Naive thymus-derived CD8-positive, alpha-beta T cell (primary cell): ENCODE measurements at regions of chr14 and their contacts with region 1.

Region 1: GRCh38 chr14:61512026-61512834 is 183.1 kb upstream of the HIF1A start:
- DNase-seq: no peak
- ATAC-seq: peak; percentile 28 to 35
- H3K4me3 Mint-ChIP-seq: peak overlapping the region in 6 of 10 donors; percentile 22 to 50 (median 45)
- H3K27ac Mint-ChIP-seq: peak overlapping the region in 9 of 10 donors; percentile 83 to 97 (median 92)
- H3K4me1 Mint-ChIP-seq: peaks cover 50 to 93% (median 86%) of the 10 kb centered on the region in 4 donors
- H3K27me3 Mint-ChIP-seq: no peaks in the 10 kb centered on the region

Region 2: DNA sequence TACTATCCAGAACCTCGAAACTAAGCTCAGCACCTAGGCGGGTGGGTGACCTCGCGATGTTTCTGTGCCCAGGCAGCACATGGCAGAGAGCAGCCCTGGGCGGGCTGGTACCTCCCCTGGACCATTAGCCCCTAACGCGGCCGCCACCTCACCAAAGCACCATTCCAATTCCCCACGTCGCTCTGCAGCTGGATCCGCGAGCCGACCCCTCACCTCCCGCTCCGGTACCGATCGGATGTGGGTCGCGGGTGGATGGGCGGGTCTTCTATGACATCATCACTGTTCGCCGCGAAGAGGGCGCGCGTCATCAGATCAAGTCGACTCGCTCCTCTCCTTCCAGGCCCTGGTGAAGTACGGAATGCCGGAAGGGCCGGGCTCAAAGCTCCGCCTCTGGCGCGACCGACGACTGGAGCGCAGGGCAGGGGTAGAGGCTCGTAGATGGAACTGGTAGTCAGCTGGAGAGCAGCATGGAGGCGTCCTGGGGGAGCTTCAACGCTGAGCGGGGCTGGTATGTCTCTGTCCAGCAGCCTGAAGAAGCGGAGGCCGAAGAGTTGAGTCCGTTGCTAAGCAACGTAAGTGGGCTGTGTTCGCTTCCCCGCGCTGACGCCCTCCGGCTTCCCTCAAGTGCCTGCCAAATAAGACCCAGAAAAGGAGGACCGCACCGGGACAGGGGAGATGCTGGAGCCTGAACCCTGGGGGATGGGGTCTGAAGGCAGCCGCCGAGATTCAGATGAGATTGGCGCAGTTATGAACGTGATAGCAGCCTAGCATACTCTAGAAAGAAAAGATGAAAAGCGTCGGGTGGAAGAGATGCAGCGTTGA is 531.2 kb before region 1 on chr14 and contains the starts of genes SLC38A6 and TRMT5:
- POLR2A ChIA-PET with region 1: interaction called, 10 read pairs
- DNase-seq: peak; percentile 71 to 99 (median 93)
- ATAC-seq: peak; percentile 86 to 88
- H3K4me3 Mint-ChIP-seq: no peak within 1 kb of the TSS
- H3K27ac Mint-ChIP-seq: no peak within 1 kb of the TSS
- H3K4me1 Mint-ChIP-seq: peaks cover 8 to 25% (median 18%) of the 10 kb centered on the region in 4 donors
- H3K27me3 Mint-ChIP-seq: no peaks in the 10 kb centered on the region
- polyA plus RNA-seq, gene SLC38A6: 3.6 to 7.8 (median 7.7) TPM
- polyA plus RNA-seq, gene TRMT5: 2.5 to 7.6 (median 3.8) TPM

Region 3: GRCh38 chr14:61475316-61475715 is 36.9 kb before region 1 on chr14:
- POLR2A ChIA-PET with region 1: interaction called, 10 read pairs
- DNase-seq: peak in 2 of 10 donors; percentile 37 to 45
- ATAC-seq: no peak
- H3K4me3 Mint-ChIP-seq: peak overlapping the region in 9 of 10 donors; percentile 25 to 81 (median 61)
- H3K27ac Mint-ChIP-seq: peak overlapping the region in 9 of 10 donors; percentile 93 to 100 (median 99)
- H3K4me1 Mint-ChIP-seq: peaks cover 53 to 96% (median 93%) of the 10 kb centered on the region in 4 donors
- H3K27me3 Mint-ChIP-seq: no peaks in the 10 kb centered on the region

Region 4: GRCh38 chr14:61553725-61554641 is 41.8 kb after region 1 on chr14:
- POLR2A ChIA-PET with region 1: no interaction called
- DNase-seq: no peak
- ATAC-seq: no peak
- H3K4me3 Mint-ChIP-seq: peak overlapping the region in 2 of 10 donors; percentile 1 to 29
- H3K27ac Mint-ChIP-seq: peak overlapping the region; percentile 7 to 92 (median 80)
- H3K4me1 Mint-ChIP-seq: peaks cover 22 to 66% (median 51%) of the 10 kb centered on the region in 4 donors
- H3K27me3 Mint-ChIP-seq: no peaks in the 10 kb centered on the region

Region 5: DNA sequence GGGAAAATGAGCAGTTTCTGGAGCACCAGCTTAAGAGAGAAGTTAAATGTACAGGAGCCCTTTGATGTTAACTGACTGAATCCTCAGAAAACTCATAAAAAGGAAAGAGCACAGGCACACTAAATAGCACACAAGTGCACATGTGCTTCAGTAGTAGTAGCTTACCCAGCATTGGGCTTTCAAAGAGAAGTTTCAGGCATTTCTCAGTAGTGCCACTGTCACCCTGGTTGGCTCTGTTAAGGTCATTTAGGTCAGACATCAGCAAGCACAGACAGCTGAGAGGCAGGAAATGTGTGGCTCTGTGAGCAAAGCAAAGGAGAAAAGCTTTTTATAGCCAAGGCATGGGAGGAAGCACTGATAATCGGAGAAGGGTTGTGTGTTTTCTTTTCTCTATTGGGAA is 86.8 kb after region 1 on chr14:
- POLR2A ChIA-PET with region 1: no interaction called
- DNase-seq: no peak
- ATAC-seq: peak; percentile 48 to 73
- H3K4me3 Mint-ChIP-seq: peak overlapping the region in 2 of 10 donors; percentile 8 to 10
- H3K27ac Mint-ChIP-seq: peak overlapping the region in 2 of 10 donors; percentile 1 to 29
- H3K4me1 Mint-ChIP-seq: peaks cover 16 to 44% (median 28%) of the 10 kb centered on the region in 4 donors
- H3K27me3 Mint-ChIP-seq: peaks cover 0 to 2% (median 0%) of the 10 kb centered on the region in 5 donors

Region 6: DNA sequence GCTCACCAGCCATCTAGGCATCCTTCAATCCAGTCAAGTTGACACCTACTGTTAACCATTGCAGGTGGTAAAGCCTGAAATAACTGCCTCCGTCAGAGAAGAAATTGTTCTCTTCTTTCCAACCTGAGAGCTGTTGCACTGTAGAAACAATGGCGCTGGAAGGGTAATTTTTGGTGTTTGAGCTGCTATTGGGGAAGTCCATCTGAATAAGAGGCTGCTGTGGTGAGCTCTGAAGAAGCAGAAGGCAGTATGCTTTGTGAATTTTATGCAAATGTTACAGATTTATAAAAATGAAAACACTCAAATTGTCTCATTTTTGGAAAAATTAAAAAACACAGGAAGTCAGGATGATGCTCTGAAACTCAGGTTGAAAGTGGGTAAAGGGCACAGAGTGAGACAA is 310.2 kb after region 1 on chr14:
- POLR2A ChIA-PET with region 1: no interaction called
- DNase-seq: no peak
- ATAC-seq: no peak
- H3K4me3 Mint-ChIP-seq: no peak overlapping the region
- H3K27ac Mint-ChIP-seq: no peak overlapping the region
- H3K4me1 Mint-ChIP-seq: no peaks in the 10 kb centered on the region
- H3K27me3 Mint-ChIP-seq: peaks cover under 1 to 14% (median 5%) of the 10 kb centered on the region in 5 donors